ENCODE measurements at regions of chr9 and their contacts with region 1.

Region 1: DNA sequence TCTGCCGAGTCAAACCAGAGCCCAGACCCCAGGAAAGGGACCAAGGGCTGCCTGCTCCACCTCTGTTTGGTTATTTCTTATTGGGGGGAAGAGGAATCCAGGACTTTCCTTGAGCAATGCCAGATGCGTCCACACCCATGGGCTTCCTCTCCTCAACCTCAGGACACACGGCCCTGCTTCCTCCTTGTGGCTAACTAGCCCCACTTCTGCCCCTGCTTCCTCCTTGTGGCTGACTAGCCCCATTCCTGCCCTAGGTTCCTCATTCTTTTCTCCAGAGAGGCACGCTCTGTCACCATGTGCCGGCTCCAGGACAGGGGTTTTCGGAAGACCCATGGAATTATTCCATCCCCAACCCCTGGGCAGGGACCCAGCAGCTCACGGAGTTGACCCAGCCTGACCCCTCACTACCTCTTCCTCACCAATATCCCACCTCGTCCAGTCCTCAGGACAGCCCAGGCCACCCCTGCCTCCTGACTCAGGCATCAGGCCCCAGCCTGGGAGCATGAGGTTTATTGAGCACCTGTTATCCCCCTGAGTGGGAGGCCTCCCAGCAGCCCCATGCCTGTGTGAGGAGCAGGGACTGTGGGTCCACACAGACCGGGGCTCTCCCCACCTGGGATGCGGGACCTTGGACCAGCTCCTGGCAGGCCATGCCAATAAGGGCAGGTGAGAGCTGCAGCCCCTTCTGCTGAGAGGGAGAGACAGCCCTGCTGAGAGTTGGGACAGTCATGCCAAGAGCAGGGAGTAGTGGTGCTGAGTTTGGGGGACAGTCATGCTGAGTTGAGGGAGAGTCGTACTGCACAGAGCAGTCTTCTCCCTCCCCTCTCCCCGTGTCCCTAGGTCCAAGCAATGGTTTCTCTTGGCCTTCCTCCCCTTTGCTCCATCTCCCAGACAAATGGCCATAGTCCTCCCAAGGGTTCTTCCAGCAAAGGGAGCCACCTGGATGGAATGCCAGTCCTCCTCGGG is 11.8 kb upstream of the FCN1 start:
- DNase-seq: no peak
- ATAC-seq: no peak
- H3K4me3 ChIP-seq: no peak overlapping the region
- H3K27ac ChIP-seq: no peak overlapping the region
- H3K4me1 ChIP-seq: no peaks in the 10 kb centered on the region
- H3K27me3 ChIP-seq: no peaks in the 10 kb centered on the region
- CTCF ChIP-seq: no peak

Region 2: DNA sequence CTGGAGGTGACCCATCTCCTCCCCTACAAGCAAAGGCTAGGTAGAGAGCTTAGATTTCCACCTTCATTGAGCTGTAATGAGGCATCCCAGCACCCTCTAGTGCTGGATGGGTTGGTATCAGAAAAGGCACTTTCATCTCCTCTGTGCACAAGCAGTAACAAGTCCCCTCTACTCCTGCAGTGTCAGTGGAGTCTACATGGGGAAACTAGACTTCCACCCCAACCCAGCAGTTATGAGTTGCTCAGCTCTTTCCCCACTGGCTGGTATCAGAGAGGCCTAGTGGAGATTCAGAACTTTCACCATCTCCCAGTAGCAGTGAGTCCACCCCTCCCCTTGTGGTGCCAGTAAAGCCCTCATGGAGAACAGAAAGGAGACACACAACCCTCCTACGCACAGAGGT is 29.7 kb before region 1 on chr9:
- CTCF ChIA-PET with region 1: interaction called, 15 read pairs
- POLR2A ChIA-PET with region 1: no interaction called
- in situ Hi-C with region 1: no loop called
- intact Hi-C with region 1: no loop called
- DNase-seq: no peak
- ATAC-seq: no peak
- H3K4me3 ChIP-seq: no peak overlapping the region
- H3K27ac ChIP-seq: no peak overlapping the region
- H3K4me1 ChIP-seq: no peaks in the 10 kb centered on the region
- H3K27me3 ChIP-seq: peaks cover 3% of the 10 kb centered on the region; the same call in 1 of the 2 replicates
- CTCF ChIP-seq: no peak

Measured in Panc1 (cell line).